Mammary epithelial cell (primary cell): ENCODE measurements at regions of chr10 and their contacts with region 1.

Region 1: GRCh38 chr10:26682931-26683330 is 14.6 kb upstream of the PDSS1 start:
- DNase-seq: no peak
- H3K4me3 ChIP-seq: no peak overlapping the region
- H3K27ac ChIP-seq: no peak overlapping the region
- H3K4me1 ChIP-seq: peaks cover 4% of the 10 kb centered on the region
- H3K27me3 ChIP-seq: no peaks in the 10 kb centered on the region
- CTCF ChIP-seq: no peak

Region 2: GRCh38 chr10:26612151-26612915 is 70.6 kb before region 1 on chr10:
- CTCF ChIA-PET with region 1: no interaction called
- dilution Hi-C with region 1: no loop called
- in situ Hi-C with region 1: no loop called
- intact Hi-C with region 1: loop called (anchors 10 kb)
- DNase-seq: peak; percentile 25
- H3K4me3 ChIP-seq: no peak overlapping the region
- H3K27ac ChIP-seq: no peak overlapping the region
- H3K4me1 ChIP-seq: no peaks in the 10 kb centered on the region
- H3K27me3 ChIP-seq: no peaks in the 10 kb centered on the region
- CTCF ChIP-seq: no peak